Sciatic nerve (tissue), 2 donors: ENCODE measurements at regions of chr3 and their contacts with region 1.

Region 1: DNA sequence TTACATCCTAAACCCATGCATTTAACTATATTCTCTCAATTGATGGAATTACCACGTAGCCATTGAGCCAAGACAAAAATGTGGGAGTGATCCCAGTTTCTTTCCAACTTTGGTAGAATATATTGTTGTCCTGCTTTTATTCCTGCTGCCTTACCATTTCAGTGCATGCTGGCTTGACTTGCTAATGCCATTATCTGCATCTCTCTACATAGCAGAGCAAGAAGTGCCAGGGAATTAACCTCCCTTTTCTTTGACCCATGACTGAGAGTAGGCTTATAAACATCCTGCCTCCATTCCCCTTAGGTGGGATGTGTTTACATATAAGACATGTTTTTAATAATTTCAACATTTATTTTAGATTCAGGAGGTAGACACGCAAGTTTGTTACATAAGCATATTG is 1153.4 kb downstream of the IGSF11 start:
- DNase-seq: no peak
- ATAC-seq: no peak

Region 2: DNA sequence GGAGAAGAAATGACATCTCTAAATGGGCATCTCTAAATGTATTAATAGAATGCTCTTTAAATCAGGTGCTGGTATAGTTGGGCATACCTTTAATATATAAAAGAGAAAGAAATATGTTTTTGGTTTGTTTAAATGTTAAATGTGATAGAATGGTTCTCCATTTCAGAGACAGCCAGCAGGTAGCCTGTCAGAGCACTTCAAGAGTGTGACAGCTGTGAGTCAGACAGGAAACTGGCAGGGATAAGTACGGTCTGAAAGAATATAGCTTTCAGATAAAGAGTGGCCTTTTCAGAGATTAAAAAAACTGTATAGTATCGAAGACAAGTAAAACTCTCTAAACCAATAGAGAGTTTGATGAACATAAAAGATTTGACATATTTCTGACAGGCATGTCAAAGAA is 499.4 kb after region 1 on chr3:
- intact Hi-C with region 1: loop called (anchors 2 kb)
- DNase-seq: no peak
- ATAC-seq: no peak